Ascending aorta (tissue), 2 donors: ENCODE measurements at regions of chr2 and their contacts with region 1.

Region 1: GRCh38 chr2:191501561-191502168 is 176.3 kb upstream of the NABP1 start:
- DNase-seq: no peak
- H3K4me3 ChIP-seq: no peak overlapping the region
- H3K27ac ChIP-seq: peak overlapping the region; percentile 3 to 36
- H3K4me1 ChIP-seq: peaks cover 0 to 15% of the 10 kb centered on the region in 2 donors
- H3K27me3 ChIP-seq: no peaks in the 10 kb centered on the region
- CTCF ChIP-seq: peak; percentile 57 to 75 (median 66)

Region 2: GRCh38 chr2:191218292-191218898 is 283.3 kb before region 1 on chr2:
- intact Hi-C with region 1: loop called (anchors 1 kb)
- DNase-seq: no peak
- H3K4me3 ChIP-seq: no peak overlapping the region
- H3K27ac ChIP-seq: no peak overlapping the region
- H3K4me1 ChIP-seq: peaks cover 0 to 11% of the 10 kb centered on the region in 2 donors
- H3K27me3 ChIP-seq: no peaks in the 10 kb centered on the region
- CTCF ChIP-seq: peak; percentile 11 to 66 (median 59)

Region 3: GRCh38 chr2:191231995-191232394 is 269.7 kb before region 1 on chr2:
- intact Hi-C with region 1: loop called (anchors 1 kb)
- DNase-seq: no peak
- H3K4me3 ChIP-seq: no peak overlapping the region
- H3K27ac ChIP-seq: no peak overlapping the region
- H3K4me1 ChIP-seq: no peaks in the 10 kb centered on the region
- H3K27me3 ChIP-seq: no peaks in the 10 kb centered on the region
- CTCF ChIP-seq: peak; percentile 18 to 48 (median 34)

Region 4: DNA sequence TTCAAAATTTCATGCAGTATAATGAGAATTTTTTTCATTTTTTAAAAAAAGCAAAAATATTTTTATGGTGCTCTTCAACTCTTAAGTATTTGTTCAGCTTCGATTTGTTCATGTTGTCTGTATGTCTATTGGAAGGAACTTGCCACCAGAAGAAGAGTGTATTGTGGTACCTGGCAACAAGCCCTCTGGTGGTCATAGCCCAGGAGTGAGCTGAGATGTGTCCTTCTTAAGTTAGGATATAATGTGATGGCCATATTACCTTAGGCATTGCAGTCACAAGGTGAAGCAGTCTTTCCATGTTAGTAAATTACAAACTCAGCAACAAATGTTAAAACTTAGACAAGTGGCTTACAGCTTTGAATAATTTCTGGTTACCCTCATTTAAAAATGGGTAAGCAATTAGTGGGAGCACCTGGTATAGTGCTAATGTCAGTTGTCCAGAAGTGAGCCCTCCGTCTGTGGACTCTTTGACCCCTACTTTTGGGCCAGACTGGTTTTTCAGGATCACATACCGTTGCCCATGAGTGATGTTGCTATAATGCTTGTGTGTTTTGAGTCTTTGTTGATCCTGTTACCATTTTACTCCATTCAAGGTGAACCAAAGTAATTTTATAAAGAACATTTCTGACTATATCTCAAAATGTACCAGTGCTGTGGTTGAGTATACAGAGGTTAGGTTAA is 199.1 kb before region 1 on chr2:
- intact Hi-C with region 1: loop called (anchors 5 kb)
- DNase-seq: no peak
- H3K4me3 ChIP-seq: no peak overlapping the region
- H3K27ac ChIP-seq: no peak overlapping the region
- H3K4me1 ChIP-seq: peaks cover 3 to 24% of the 10 kb centered on the region in 2 donors
- H3K27me3 ChIP-seq: no peaks in the 10 kb centered on the region
- CTCF ChIP-seq: no peak

Region 5: DNA sequence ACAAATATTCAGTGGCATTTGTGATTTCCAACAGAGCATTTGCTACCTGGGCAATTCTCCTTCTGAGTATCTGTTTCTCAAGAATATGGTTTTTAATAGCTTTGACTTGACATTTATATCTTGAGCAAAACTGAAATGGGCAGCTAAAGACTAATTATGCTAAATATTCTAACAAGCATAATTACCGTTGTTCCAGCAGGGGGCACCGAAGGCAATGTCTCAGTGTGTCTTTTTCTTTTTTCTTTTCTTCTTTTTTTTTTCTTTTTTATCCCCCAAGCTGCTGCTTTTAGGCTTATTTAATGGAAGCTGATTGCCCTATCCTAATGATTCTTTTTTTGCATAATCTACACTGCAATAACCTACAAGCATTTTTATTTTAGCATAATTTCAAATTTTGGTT is 37.4 kb after region 1 on chr2:
- intact Hi-C with region 1: no loop called
- DNase-seq: no peak
- H3K4me3 ChIP-seq: no peak overlapping the region
- H3K27ac ChIP-seq: no peak overlapping the region
- H3K4me1 ChIP-seq: no peaks in the 10 kb centered on the region
- H3K27me3 ChIP-seq: no peaks in the 10 kb centered on the region
- CTCF ChIP-seq: peak in 1 of 3 experiments; percentile 37

Region 6: DNA sequence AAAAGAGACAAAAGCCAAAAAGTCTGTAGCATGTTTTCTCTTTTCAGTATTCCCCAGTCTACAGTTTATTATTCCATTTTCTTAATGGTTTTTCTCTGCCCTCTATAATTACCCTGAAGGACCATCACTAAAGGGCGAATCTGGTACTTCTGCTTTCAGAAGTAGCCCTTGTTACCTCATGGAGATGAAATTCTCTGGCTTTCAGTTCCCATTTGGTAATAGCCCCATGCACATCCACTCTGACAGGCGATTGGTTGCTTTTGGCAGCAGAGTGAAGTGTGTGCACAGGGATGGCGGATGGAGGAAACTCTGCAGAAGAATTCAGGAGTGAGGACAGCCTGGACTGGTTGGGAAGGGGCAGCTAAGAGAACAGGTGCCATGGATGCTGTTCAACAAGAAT is 109.9 kb after region 1 on chr2:
- intact Hi-C with region 1: no loop called
- DNase-seq: peak in 1 of 2 donors; percentile 21
- H3K4me3 ChIP-seq: no peak overlapping the region
- H3K27ac ChIP-seq: no peak overlapping the region
- H3K4me1 ChIP-seq: no peaks in the 10 kb centered on the region
- H3K27me3 ChIP-seq: no peaks in the 10 kb centered on the region
- CTCF ChIP-seq: no peak

Region 7: DNA sequence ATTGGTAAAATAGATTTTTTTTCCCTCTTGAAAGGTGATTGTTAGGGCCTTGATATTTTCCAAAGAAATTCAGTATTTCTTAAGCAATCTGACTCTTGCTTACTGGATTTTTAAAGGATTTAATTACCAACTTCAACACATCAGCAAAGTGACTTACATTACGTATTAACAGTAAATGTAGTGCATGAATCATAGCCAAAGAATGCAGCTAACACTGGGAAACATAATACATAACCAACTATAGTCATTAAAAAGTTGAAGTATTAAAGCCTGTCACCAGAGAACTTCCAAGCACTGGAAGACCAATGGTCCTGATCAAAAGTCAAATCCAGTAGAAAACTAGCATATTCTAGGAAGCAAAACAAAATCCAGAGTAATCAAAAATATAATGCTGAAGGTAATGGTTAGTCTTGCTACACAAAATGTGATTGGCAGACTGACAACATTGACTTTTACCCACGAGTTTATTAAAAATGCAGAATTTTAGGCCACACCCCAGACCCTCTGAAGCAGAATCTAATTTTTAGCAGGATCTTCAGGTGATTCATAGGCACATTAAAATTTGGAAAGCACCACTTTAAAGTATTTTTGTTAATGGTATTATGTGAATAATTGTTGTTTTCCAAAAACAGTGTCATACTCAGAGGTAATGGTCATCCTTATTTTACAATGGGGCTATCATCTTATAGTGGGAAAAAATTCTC is 377.1 kb after region 1 on chr2:
- intact Hi-C with region 1: no loop called
- DNase-seq: no peak
- H3K4me3 ChIP-seq: no peak overlapping the region
- H3K27ac ChIP-seq: no peak overlapping the region
- H3K4me1 ChIP-seq: no peaks in the 10 kb centered on the region
- H3K27me3 ChIP-seq: no peaks in the 10 kb centered on the region
- CTCF ChIP-seq: no peak